Astrocyte of the cerebellum (primary cell): ENCODE measurements at regions of chr5 and their contacts with region 1.

Region 1: GRCh38 chr5:55407059-55407684 is 99.4 kb downstream of the MTREX start:
- DNase-seq: peak; percentile 42
- H3K4me3 ChIP-seq: no peak overlapping the region
- CTCF ChIP-seq: peak; percentile 83

Region 2: DNA sequence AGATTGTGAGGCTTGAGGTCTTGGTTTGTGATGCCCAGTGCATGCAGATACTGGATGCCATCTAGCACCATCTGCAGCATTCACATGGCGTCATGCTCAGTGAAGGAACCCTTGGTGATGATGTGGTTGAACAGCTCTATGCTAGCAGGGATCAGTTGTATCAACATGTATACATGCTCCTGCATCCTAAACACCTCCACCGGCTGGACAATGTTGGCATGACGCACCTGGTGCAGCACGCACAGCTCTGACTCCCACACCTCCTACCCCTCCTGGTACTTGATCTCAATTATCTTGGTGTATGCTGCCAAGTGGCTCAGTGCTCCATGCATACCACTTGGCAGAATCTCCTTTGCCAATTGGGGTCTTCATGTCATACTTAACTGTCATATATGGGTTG is 50.3 kb before region 1 on chr5:
- in situ Hi-C with region 1: loop called (anchors 5 kb)
- DNase-seq: no peak
- H3K4me3 ChIP-seq: no peak overlapping the region
- CTCF ChIP-seq: no peak

Region 3: DNA sequence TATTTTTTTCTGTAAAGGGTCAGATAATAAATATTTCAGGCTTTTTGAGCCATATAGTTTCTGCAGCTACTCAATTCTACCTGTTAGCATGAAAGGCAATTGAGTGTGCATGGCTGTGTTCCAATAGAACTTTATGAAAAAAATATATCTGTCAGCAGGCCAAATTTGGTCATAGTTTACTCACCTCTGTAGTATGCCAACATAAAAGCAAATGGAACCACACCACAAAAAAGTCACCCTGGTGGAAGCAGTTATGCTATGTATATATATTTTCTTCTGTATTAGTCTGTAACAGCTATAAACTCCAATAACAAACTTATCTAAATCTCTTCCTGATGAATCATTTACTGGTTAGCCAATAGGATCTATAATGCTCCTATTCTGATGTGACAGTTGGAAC is 301.6 kb after region 1 on chr5:
- in situ Hi-C with region 1: loop called (anchors 10 kb)
- DNase-seq: no peak
- H3K4me3 ChIP-seq: no peak overlapping the region
- CTCF ChIP-seq: no peak